B cell (primary cell): ENCODE measurements at regions of chr3 and their contacts with region 1.

Region 1: GRCh38 chr3:197791113-197791891 is at the start of gene LRCH3:
- DNase-seq: peak; percentile 91
- ATAC-seq: peak; percentile 75
- H3K4me3 ChIP-seq: peak within 1 kb of the TSS; percentile 73 to 98 (median 95)
- H3K4me3 Mint-ChIP-seq: peak within 1 kb of the TSS; percentile 96
- H3K27ac ChIP-seq: peak within 1 kb of the TSS; percentile 96 to 99
- H3K27ac Mint-ChIP-seq: peak within 1 kb of the TSS; percentile 97
- H3K4me1 ChIP-seq: peaks cover 33 to 36% of the 10 kb centered on the region in 2 donors
- H3K4me1 Mint-ChIP-seq: peaks cover 54% of the 10 kb centered on the region
- H3K27me3 ChIP-seq: no peaks in the 10 kb centered on the region
- H3K27me3 Mint-ChIP-seq: no peaks in the 10 kb centered on the region
- CTCF ChIP-seq: no peak
- total RNA-seq, gene LRCH3: 136 and 145 TPM in 2 replicates

Region 2: DNA sequence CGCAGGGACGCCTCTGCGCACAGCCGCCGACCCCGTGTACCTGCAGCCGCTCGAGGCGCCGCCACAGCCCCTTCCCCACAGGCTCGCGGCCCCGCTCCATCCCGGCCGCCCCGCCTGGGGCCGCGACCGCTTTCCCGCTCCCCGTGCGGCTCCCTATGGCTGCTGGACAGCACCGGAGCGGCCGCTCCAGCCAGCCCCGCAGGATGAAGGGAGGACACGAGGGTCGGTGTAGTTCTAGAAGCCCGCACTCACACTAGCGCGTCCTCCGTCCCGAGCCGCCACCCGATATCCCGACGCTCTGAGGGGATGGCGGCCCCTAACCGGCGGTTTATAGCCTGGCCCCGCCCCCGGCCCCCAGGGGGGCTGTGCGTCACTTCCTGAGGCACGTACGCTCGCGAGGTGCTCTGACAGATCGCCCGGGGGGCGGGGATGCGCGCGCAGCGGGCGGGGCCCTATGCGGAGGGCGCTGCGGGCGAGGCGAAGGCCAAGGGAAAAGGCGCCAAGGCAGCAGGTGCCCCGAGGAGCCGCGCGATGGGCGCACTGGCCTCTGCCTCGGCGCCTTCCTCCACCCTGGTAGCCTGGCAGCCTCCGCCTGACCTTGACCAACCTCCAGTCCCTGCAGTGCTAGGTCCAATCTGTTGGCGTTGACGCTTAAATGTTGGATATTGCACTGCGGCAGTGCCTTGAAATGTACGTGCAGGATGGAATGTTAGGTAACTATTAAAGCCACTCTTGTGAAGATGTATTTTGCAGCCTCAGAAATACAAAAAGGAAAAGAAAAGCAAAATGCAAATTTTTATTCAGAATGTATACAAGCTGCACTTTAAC is 1709.3 kb before region 1 on chr3 and contains the start of gene TFRC:
- CTCF ChIA-PET with region 1: no interaction called
- POLR2A ChIA-PET with region 1: no interaction called
- intact Hi-C with region 1: no loop called
- DNase-seq: peak; percentile 97
- ATAC-seq: peak; percentile 93
- H3K4me3 ChIP-seq: peak within 1 kb of the TSS; percentile 79 to 99 (median 86)
- H3K4me3 Mint-ChIP-seq: peak within 1 kb of the TSS; percentile 93
- H3K27ac ChIP-seq: peak within 1 kb of the TSS; percentile 84 to 97
- H3K27ac Mint-ChIP-seq: peak within 1 kb of the TSS; percentile 96
- H3K4me1 ChIP-seq: peaks cover 25 to 42% of the 10 kb centered on the region in 2 donors
- H3K4me1 Mint-ChIP-seq: peaks cover 44% of the 10 kb centered on the region
- H3K27me3 ChIP-seq: no peaks in the 10 kb centered on the region
- H3K27me3 Mint-ChIP-seq: no peaks in the 10 kb centered on the region
- CTCF ChIP-seq: no peak
- total RNA-seq, gene TFRC: 104 and 117 TPM in 2 replicates

Region 3: DNA sequence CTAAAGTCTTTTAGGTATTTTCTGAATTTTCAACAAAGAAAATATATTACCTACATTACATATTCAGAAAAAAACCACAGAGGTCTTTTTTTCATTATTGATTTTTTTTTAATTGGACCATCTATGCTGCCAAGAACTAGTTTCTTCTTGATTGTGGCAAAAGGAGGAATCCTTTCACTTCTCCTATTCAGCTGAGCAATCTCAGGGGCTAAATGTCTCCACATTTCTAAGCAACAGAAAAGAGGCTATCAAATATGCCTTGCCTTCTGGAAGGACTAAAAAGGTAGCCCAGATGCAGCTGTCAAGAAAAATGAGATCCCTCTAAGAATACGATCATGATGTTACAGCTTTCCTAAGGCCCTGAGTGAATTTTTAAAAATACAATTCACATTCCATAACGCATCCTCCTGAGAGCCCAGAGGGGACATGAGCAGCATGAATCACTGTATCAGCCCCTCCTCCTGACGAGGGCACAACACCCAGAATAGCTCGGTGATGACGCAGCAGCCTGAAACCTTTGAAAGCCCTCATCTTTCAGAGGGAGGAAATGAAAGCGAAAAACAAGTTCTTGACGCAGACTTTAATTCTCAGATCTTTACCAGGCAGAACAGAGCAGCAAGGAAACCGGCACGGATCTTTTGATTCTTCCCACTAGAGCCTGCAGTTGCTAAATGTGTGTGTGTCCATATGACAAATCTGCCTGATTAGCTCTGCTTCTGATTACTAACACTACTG is 79.2 kb before region 1 on chr3:
- CTCF ChIA-PET with region 1: no interaction called
- POLR2A ChIA-PET with region 1: interaction called, 3 read pairs
- intact Hi-C with region 1: loop called (anchors 1 kb)
- DNase-seq: peak; percentile 93
- ATAC-seq: peak; percentile 94
- H3K4me3 ChIP-seq: peak overlapping the region in 4 of 5 experiments; percentile 38 to 57 (median 50)
- H3K4me3 Mint-ChIP-seq: peak overlapping the region; percentile 84
- H3K27ac ChIP-seq: peak overlapping the region; percentile 72 to 77
- H3K27ac Mint-ChIP-seq: peak overlapping the region; percentile 93
- H3K4me1 ChIP-seq: peaks cover 28% of the 10 kb centered on the region in 2 donors
- H3K4me1 Mint-ChIP-seq: peaks cover 51% of the 10 kb centered on the region
- H3K27me3 ChIP-seq: no peaks in the 10 kb centered on the region
- H3K27me3 Mint-ChIP-seq: no peaks in the 10 kb centered on the region
- CTCF ChIP-seq: no peak

Region 4: DNA sequence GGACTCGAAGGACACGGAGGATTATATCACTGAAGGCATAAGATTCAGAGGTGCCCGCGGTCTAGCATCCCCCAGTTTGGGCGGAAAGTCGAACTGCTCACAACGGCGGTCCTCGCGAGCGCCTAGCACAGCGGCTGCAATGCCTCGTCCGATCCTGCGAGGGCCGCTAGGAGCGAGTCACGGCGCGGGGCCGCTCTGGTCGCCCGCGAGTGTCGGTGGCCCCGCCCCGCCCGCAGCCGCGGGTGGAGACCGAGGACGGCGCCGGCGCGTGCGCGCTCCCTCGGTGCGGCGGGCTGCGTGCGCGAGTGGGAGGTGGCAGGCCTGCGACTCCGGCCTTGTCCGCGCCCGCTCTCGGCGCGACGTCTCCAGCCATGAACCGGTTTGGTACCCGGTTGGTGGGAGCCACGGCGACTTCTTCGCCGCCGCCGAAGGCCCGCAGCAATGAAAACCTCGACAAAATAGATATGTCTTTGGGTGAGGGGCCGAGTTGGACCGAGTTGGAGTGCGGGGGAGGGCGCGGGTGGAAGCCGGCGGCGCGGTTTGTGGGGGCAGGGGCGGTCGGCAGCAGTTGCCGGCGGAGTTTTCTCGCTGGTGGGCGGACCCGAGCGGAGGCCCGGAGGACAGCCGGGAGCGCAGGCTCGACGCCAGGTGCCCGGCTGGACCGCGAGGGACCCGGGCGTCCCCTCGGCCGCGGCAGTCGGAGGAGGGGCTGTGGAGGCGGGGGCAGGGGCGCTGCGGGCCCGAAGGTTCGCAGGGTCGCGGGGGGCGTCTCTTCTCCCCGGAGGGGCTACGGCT is 41.5 kb before region 1 on chr3 and contains the start of gene FYTTD1:
- CTCF ChIA-PET with region 1: interaction called, 7 read pairs
- POLR2A ChIA-PET with region 1: interaction called, 7 read pairs
- intact Hi-C with region 1: loop called (anchors 1 kb)
- DNase-seq: peak; percentile 95
- ATAC-seq: peak; percentile 90
- H3K4me3 ChIP-seq: peak within 1 kb of the TSS; percentile 76 to 97 (median 83)
- H3K4me3 Mint-ChIP-seq: peak within 1 kb of the TSS; percentile 96
- H3K27ac ChIP-seq: peak within 1 kb of the TSS; percentile 88 to 94
- H3K27ac Mint-ChIP-seq: peak within 1 kb of the TSS; percentile 97
- H3K4me1 ChIP-seq: peaks cover 18 to 26% of the 10 kb centered on the region in 2 donors
- H3K4me1 Mint-ChIP-seq: peaks cover 43% of the 10 kb centered on the region
- H3K27me3 ChIP-seq: no peaks in the 10 kb centered on the region
- H3K27me3 Mint-ChIP-seq: no peaks in the 10 kb centered on the region
- CTCF ChIP-seq: peak; percentile 64
- total RNA-seq, gene FYTTD1: 110 and 121 TPM in 2 replicates

Region 5: DNA sequence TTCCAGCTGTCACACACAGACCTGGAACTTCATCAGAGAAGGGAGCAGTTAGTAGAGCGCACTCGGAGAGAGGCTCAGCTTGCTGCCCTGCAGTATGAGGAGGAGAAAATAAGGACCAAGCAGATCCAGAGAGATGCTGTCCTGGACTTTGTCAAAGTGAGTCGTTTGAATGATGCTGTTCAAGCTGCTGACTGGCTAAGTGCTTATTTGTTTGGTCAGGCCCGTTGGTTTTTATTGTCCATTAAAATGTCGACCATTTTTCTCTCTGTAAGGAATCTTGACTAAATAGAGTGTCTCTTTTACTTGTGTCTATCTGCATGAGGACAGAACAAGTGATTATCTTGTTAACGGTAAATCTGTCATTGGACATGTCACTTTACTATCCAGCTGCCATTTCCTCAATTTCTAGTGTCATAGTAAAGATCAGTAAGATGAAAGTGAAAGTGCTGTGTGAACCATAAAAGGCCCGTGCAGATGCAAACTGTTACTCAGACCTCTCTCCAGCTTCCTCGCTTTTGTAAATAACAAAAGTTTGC is 56.6 kb after region 1 on chr3:
- CTCF ChIA-PET with region 1: no interaction called
- POLR2A ChIA-PET with region 1: no interaction called
- intact Hi-C with region 1: loop called (anchors 5 kb)
- DNase-seq: peak; percentile 73
- ATAC-seq: peak; percentile 95
- H3K4me3 ChIP-seq: peak overlapping the region in 4 of 5 experiments; percentile 10 to 42 (median 30)
- H3K4me3 Mint-ChIP-seq: peak overlapping the region; percentile 79
- H3K27ac ChIP-seq: peak overlapping the region; percentile 71 to 85
- H3K27ac Mint-ChIP-seq: peak overlapping the region; percentile 91
- H3K4me1 ChIP-seq: peaks cover 9 to 11% of the 10 kb centered on the region in 2 donors
- H3K4me1 Mint-ChIP-seq: peaks cover 18% of the 10 kb centered on the region
- H3K27me3 ChIP-seq: no peaks in the 10 kb centered on the region
- H3K27me3 Mint-ChIP-seq: no peaks in the 10 kb centered on the region
- CTCF ChIP-seq: no peak